Endothelial cell of umbilical vein (primary cell): ENCODE measurements at regions of chr2 and their contacts with region 1.

Region 1: DNA sequence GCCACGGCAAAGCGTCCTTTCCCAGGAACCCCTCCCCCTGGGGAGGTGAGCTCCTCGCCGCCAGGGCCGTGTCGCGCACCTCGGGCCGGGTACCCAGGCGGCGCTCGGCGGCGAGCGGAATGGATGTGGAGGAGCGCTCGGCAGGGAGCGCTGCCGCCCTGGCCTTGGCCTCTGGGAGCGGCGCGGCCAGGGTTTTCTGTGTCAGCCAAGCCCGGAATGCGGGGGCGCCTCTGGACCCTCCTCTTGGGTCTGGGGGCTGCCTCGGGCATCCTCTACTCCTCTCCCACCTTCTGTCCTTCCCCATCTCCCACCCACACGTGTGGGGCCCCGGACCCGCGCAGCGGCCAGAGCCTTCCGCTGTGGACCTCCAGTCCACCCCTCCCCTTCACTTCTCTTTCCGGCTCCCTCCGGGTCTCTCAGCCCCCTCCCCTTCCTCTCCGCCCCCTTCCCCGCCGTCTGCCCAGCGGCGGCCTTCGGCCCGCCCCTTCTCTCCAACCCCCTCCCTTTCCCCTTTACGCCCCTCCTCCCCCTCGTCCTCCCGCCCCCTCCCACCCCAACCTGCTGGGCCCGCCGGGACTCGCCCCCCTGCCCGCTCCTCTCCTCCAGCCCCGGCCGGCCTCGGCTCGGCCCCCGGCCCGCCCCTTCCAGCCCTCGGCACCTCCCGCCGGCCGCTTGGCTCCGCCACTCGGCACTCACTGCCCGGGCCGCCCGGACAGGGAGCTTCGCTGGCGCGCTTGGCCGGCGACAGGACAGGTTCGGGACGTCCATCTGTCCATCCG is at the start of gene MERTK:
- DNase-seq: peak; percentile 92
- H3K4me3 ChIP-seq: peak within 1 kb of the TSS; percentile 72 to 99 (median 95)
- H3K27ac ChIP-seq: peak within 1 kb of the TSS; percentile 64
- H3K4me1 ChIP-seq: peaks cover 28% of the 10 kb centered on the region
- H3K27me3 ChIP-seq: no peaks in the 10 kb centered on the region
- CTCF ChIP-seq: peak; percentile 52 to 76
- POLR2A ChIP-seq: peak; percentile 88
- total RNA-seq, gene MERTK: 37.3 TPM in 2 replicates

Region 2: GRCh38 chr2:111252436-111252835 is 645.7 kb before region 1 on chr2:
- CTCF ChIA-PET with region 1: no interaction called
- POLR2A ChIA-PET with region 1: no interaction called
- dilution Hi-C with region 1: no loop called
- intact Hi-C with region 1: no loop called
- DNase-seq: no peak
- H3K4me3 ChIP-seq: no peak overlapping the region
- H3K27ac ChIP-seq: no peak overlapping the region
- H3K4me1 ChIP-seq: no peaks in the 10 kb centered on the region
- H3K27me3 ChIP-seq: no peaks in the 10 kb centered on the region
- CTCF ChIP-seq: no peak
- POLR2A ChIP-seq: no peak

Region 3: GRCh38 chr2:111698743-111699554 is 199.2 kb before region 1 on chr2:
- CTCF ChIA-PET with region 1: no interaction called
- POLR2A ChIA-PET with region 1: no interaction called
- dilution Hi-C with region 1: no loop called
- intact Hi-C with region 1: no loop called
- DNase-seq: peak; percentile 95
- H3K4me3 ChIP-seq: no peak overlapping the region
- H3K27ac ChIP-seq: peak overlapping the region; percentile 76
- H3K4me1 ChIP-seq: peaks cover 39% of the 10 kb centered on the region
- H3K27me3 ChIP-seq: no peaks in the 10 kb centered on the region
- CTCF ChIP-seq: peak; percentile 46 to 57
- POLR2A ChIP-seq: no peak

Region 4: GRCh38 chr2:111883661-111884591 is 14.2 kb before region 1 on chr2 and contains the start of gene ANAPC1:
- CTCF ChIA-PET with region 1: interaction called, 17 read pairs
- POLR2A ChIA-PET with region 1: no interaction called
- dilution Hi-C with region 1: no loop called
- intact Hi-C with region 1: no loop called
- DNase-seq: peak; percentile 87
- H3K4me3 ChIP-seq: peak within 1 kb of the TSS; percentile 90 to 97 (median 96)
- H3K27ac ChIP-seq: peak within 1 kb of the TSS; percentile 66
- H3K4me1 ChIP-seq: peaks cover 7% of the 10 kb centered on the region
- H3K27me3 ChIP-seq: no peaks in the 10 kb centered on the region
- CTCF ChIP-seq: no peak
- POLR2A ChIP-seq: peak; percentile 96
- total RNA-seq, gene ANAPC1: 58.3 and 61.5 TPM in 2 replicates

Region 5: DNA sequence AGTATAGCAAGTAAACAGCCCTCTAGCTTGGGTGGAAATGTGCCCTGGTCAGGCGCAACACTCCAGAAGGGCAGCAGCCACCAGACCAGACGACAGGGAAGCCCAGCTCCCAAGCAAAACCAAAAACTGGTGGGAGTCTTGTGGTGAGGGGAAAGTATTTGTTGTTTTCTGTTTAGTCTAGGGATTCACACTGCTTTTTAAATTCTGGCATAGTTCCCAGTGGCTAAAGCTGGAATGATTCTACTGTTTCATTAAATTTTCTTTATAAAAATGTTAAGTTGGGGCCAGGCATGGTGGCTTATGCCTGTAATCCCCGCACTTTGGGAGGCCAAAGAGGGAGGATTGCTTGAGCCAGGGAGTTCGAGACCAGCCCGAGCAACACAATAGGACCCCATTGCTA is 38.8 kb after region 1 on chr2:
- CTCF ChIA-PET with region 1: interaction called, 3 read pairs
- POLR2A ChIA-PET with region 1: interaction called, 5 read pairs
- dilution Hi-C with region 1: no loop called
- intact Hi-C with region 1: loop called (anchors 1 kb)
- DNase-seq: peak; percentile 41
- H3K4me3 ChIP-seq: no peak overlapping the region
- H3K27ac ChIP-seq: peak overlapping the region; percentile 76
- H3K4me1 ChIP-seq: peaks cover 30% of the 10 kb centered on the region
- H3K27me3 ChIP-seq: no peaks in the 10 kb centered on the region
- CTCF ChIP-seq: no peak
- POLR2A ChIP-seq: no peak

Region 6: GRCh38 chr2:111954602-111955332 is 56.7 kb after region 1 on chr2:
- CTCF ChIA-PET with region 1: no interaction called
- POLR2A ChIA-PET with region 1: no interaction called
- dilution Hi-C with region 1: no loop called
- intact Hi-C with region 1: no loop called
- DNase-seq: peak; percentile 86
- H3K4me3 ChIP-seq: no peak overlapping the region
- H3K27ac ChIP-seq: no peak overlapping the region
- H3K4me1 ChIP-seq: peaks cover 9% of the 10 kb centered on the region
- H3K27me3 ChIP-seq: no peaks in the 10 kb centered on the region
- CTCF ChIP-seq: no peak
- POLR2A ChIP-seq: no peak

Region 7: DNA sequence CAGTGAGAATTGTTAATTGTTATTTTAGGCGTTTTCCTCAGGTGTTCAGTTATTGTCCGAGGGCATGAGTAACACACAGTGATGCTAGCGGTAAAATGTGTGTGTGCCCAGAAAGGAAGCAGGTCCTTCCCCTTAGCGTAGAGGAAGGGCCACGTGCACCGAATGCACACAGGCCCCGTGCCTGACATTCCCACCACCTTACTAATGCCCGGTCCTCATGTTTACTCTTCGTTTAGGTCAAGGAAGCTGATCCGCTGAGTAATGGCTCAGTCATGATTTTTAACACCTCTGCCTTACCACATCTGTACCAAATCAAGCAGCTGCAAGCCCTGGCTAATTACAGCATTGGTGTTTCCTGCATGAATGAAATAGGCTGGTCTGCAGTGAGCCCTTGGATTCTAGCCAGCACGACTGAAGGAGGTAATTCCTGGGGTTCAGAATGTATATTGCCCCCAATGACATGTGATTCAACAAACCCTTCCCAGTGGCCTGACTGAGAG is 77.0 kb after region 1 on chr2:
- CTCF ChIA-PET with region 1: interaction called, 21 read pairs
- POLR2A ChIA-PET with region 1: interaction called, 4 read pairs
- dilution Hi-C with region 1: no loop called
- intact Hi-C with region 1: loop called (anchors 1 kb)
- DNase-seq: peak; percentile 99
- H3K4me3 ChIP-seq: no peak overlapping the region
- H3K27ac ChIP-seq: peak overlapping the region; percentile 96
- H3K4me1 ChIP-seq: peaks cover 38% of the 10 kb centered on the region
- H3K27me3 ChIP-seq: no peaks in the 10 kb centered on the region
- CTCF ChIP-seq: no peak
- POLR2A ChIP-seq: no peak

Region 8: DNA sequence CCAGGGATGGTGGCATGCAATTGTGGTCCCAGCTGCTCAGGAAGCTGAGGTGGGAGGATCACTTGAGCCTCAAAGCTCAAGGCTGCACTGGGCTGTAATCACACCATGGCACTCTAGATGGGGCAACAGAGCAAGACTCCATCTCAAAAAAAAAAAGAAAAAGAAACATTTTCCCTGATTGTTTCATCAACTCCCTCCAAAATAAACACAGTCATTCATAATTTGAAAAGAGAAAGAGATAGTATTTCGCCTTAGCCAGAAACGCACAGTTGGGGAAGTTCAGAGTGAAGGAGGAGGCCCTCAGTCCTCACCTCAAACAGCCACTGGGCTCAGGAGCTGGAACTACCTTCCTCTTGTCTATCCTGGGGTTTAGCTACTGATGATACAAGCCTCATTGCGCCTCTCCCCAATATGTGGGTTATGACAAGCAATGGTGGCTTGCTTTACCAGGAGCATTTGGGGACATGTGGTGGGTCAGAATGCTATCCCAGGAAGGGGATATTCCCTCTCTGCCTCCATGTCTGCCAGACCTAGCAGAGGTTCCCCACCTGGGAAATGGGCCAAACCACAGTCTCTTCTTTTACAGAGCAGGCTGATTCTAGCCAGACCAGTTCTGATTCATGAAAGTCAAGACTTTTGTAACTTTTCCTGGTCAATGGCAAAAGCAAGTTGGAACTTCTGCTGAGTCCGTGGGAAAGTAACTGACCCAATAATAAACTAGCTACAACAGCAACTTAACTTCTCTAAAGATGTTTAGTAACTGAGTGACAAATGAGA is 134.8 kb after region 1 on chr2:
- CTCF ChIA-PET with region 1: interaction called, 5 read pairs
- POLR2A ChIA-PET with region 1: interaction called, 5 read pairs
- dilution Hi-C with region 1: no loop called
- intact Hi-C with region 1: loop called (anchors 1 kb)
- DNase-seq: peak; percentile 58
- H3K4me3 ChIP-seq: no peak overlapping the region
- H3K27ac ChIP-seq: peak overlapping the region; percentile 65
- H3K4me1 ChIP-seq: peaks cover 39% of the 10 kb centered on the region
- H3K27me3 ChIP-seq: no peaks in the 10 kb centered on the region
- CTCF ChIP-seq: peak; percentile 6 to 12
- POLR2A ChIP-seq: peak; percentile 38